ENCODE measurements at regions of chr16 and their contacts with region 1.

Region 1: GRCh38 chr16:28291873-28292660 is at the start of gene SBK1:
- DNase-seq: peak; percentile 96
- H3K4me3 Mint-ChIP-seq: peak within 1 kb of the TSS; percentile 83
- H3K27ac Mint-ChIP-seq: peak within 1 kb of the TSS; percentile 70
- H3K4me1 Mint-ChIP-seq: peaks cover 42% of the 10 kb centered on the region
- H3K27me3 Mint-ChIP-seq: peaks cover 26% of the 10 kb centered on the region
- total RNA-seq, gene SBK1: 0.85 and 1.5 TPM in 2 replicates

Region 2: GRCh38 chr16:27646806-27647205 is 645.3 kb before region 1 on chr16:
- intact Hi-C with region 1: no loop called
- DNase-seq: no peak
- H3K4me3 Mint-ChIP-seq: no peak overlapping the region
- H3K27ac Mint-ChIP-seq: no peak overlapping the region
- H3K4me1 Mint-ChIP-seq: no peaks in the 10 kb centered on the region
- H3K27me3 Mint-ChIP-seq: no peaks in the 10 kb centered on the region

Region 3: DNA sequence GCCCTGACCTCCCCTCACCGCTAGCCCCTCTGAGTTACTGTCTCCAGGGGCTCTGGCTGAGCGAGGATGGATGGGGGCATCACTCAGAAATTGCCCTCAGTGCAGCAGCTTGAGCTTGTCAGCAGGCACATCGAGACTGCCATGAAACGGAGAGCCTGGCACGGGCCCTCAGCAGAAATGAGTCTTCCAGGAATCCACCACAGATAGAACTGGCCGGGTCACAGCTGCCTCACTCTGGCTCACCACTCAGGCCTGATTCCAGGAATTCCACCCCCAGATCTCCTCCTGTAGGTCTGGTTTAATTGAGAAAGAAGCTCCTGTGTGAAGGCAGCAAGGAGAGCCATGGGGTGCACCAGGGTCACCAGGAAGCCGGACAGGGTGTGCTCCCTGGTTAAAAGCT is 314.1 kb before region 1 on chr16:
- intact Hi-C with region 1: no loop called
- DNase-seq: no peak
- H3K4me3 Mint-ChIP-seq: no peak overlapping the region
- H3K27ac Mint-ChIP-seq: no peak overlapping the region
- H3K4me1 Mint-ChIP-seq: no peaks in the 10 kb centered on the region
- H3K27me3 Mint-ChIP-seq: no peaks in the 10 kb centered on the region

Region 4: GRCh38 chr16:28277537-28278388 is 14.3 kb before region 1 on chr16:
- intact Hi-C with region 1: loop called (anchors 2 kb)
- DNase-seq: peak; percentile 95
- H3K4me3 Mint-ChIP-seq: peak overlapping the region; percentile 77
- H3K27ac Mint-ChIP-seq: peak overlapping the region; percentile 60
- H3K4me1 Mint-ChIP-seq: peaks cover 28% of the 10 kb centered on the region
- H3K27me3 Mint-ChIP-seq: peaks cover 23% of the 10 kb centered on the region

Region 5: GRCh38 chr16:28309811-28310311 is 17.8 kb after region 1 on chr16:
- intact Hi-C with region 1: loop called (anchors 2 kb)
- DNase-seq: peak; percentile 89
- H3K4me3 Mint-ChIP-seq: peak overlapping the region; percentile 46
- H3K27ac Mint-ChIP-seq: peak overlapping the region; percentile 88
- H3K4me1 Mint-ChIP-seq: peaks cover 20% of the 10 kb centered on the region
- H3K27me3 Mint-ChIP-seq: no peaks in the 10 kb centered on the region

Measured in activated CD4-positive, alpha-beta T cell treated with anti-CD3 and anti-CD28 coated beads, Interleukin-2, amount 10 ng/mL, durations not matched to agents 24 days and 14 days (primary cell).